Cardiac septum (tissue), 1 donor: ENCODE measurements at regions of chr9 and their contacts with region 1.

Region 1: GRCh38 chr9:127916665-127917613 is at the start of gene ST6GALNAC4:
- DNase-seq: peak; percentile 98
- total RNA-seq, gene ST6GALNAC4: 48.1 TPM

Region 2: GRCh38 chr9:127503947-127504782 is 412.8 kb before region 1 on chr9:
- intact Hi-C with region 1: loop called (anchors 2 kb)
- DNase-seq: peak; percentile 88

Region 3: DNA sequence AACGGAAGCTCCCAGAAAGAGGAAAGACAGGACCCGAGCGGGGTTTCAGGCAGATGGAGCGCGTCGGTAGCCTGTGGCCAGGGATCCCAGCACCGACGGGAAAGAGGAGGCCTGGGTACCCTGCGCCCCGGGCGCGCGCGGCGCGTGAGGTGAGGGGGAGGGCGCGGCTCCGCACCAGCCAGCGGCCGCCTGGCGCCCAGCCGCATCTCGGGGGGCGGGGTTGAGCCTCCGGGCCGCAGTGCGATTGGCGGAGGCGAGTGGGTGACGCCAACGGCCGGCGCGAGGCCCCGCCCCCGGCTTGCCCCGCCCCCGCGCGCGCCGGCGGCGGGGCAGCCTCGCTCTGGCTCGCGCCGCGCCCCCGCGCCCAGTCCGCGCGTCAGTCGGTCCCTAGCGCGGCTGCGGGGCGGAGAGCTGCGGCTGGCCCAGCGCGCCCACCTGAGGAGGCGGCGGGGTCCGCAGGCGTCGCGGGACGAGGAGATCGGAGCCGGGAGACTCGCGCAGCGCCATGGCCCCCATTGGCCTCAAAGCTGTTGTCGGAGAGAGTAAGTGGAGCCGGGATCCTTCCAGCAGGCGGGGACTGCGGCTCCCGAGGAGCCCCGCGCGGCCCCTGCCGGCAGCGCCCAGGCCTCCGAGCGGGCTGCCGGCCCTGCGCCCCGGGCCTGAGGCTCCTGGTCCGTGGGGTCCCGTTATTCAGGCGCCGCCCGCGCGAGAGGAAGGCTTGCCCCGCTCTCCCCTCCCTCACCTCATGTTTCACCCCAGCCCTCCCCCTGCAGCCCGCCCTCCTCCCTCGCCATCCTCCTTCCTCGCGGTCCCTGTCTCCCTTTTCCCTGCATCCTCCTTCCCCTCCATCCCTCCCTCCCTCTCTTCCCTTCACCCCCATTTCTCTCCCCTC is 304.8 kb before region 1 on chr9 and contains the start of gene STXBP1:
- intact Hi-C with region 1: loop called (anchors 2 kb)
- DNase-seq: peak; percentile 93
- total RNA-seq, gene STXBP1: 46.6 TPM

Region 4: GRCh38 chr9:127785023-127785932 is 131.7 kb before region 1 on chr9:
- intact Hi-C with region 1: loop called (anchors 5 kb)
- DNase-seq: peak; percentile 94

Region 5: GRCh38 chr9:127877566-127877998 is 39.4 kb before region 1 on chr9 and contains the start of gene AK1:
- intact Hi-C with region 1: loop called (anchors 5 kb)
- DNase-seq: peak; percentile 93
- total RNA-seq, gene AK1: 484 TPM